HCT116 (cell line): ENCODE measurements at regions of chr17 and their contacts with region 1.

Region 1: DNA sequence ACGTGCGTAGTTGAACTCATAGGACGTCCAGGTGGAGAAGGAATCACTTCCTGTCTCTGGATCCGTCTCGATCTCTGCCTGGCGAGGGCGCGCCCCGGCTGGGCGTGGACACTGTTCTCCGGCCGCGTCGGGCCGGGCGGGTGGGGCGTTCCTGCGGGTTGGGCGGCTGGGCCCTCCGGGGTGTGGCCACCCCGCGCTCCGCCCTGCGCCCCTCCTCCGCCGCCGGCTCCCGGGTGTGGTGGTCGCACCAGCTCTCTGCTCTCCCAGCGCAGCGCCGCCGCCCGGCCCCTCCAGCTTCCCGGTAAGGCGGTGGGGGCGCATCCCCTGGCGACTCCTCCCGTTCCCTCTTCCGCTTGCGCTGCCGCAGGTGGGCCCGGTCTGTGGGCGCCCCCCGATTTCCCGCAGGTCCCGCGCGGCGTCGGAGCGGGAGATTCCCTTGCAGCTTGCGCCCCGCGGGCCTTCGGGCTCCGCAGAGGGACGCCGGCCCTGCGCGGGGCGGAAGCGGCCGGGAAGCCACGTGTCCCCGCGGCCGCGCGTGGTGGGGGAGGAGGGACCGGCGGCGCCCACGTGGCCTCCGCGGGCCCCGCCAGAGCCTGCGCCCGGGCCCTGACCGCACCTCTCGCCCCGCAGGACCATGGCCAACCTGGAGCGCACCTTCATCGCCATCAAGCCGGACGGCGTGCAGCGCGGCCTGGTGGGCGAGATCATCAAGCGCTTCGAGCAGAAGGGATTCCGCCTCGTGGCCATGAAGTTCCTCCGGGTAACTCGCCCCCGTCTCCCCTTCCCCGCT is at the start of gene NME2:
- DNase-seq: peak; percentile 76
- ATAC-seq: peak; percentile 90
- H3K4me3 ChIP-seq: peak within 1 kb of the TSS; percentile 90 to 91
- H3K27ac ChIP-seq: peak within 1 kb of the TSS; percentile 96
- H3K4me1 ChIP-seq: peaks cover 13 to 24% of the 10 kb centered on the region in 2 experiments; a peak in 3 of 4 replicates
- H3K27me3 ChIP-seq: no peaks in the 10 kb centered on the region
- CTCF ChIP-seq: no peak
- POLR2A ChIP-seq: peak; percentile 46
- RAD21 ChIP-seq: no peak
- total RNA-seq, gene NME2: 1,287 TPM

Region 2: DNA sequence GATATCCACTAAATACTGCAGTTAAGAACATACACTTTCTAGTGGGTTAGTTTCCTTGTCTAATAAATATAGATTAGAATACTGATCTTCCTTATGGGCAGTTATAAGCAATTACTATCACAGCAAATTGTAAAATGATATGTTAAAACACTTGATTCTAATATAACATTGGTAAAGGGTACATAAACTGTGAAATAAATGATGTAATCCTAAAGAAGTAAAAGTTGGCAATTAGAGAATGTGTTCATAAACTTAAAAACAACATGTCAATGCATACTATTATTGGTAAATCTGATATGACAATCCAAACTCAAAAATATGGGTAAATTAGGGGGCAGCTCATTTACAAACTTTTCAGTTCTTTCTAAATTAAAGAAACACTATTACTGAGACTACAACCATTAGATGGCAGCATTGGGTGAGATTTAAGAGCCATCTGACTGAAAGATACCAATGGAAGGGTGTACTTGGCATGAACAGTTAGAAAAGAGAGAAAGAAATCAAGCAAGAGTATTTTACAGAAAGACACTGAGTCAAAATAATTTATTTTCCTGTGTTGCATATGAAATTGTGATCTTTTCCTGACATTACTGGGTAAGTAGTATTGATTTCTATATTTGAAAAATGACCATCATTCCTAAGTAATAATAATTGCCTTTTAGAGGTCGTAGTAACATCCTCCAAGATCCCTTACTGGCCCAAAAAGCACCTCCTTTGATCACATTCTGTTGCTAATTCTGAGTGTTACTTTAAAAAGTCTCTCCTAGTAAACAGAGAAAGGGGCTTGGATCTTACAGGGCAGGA is 165.4 kb before region 1 on chr17:
- CTCF ChIA-PET with region 1: interaction called, 8 read pairs
- POLR2A ChIA-PET with region 1: no interaction called
- RAD21 ChIA-PET with region 1: interaction called in 1 of 2 experiments, 3 read pairs
- intact Hi-C with region 1: loop called (anchors 5 kb)
- DNase-seq: peak; percentile 61
- ATAC-seq: peak; percentile 87
- H3K4me3 ChIP-seq: no peak overlapping the region
- H3K27ac ChIP-seq: no peak overlapping the region
- H3K4me1 ChIP-seq: no peaks in the 10 kb centered on the region
- H3K27me3 ChIP-seq: no peaks in the 10 kb centered on the region
- CTCF ChIP-seq: peak; percentile 34 to 89 (median 82); a peak in 5 of 6 replicates
- POLR2A ChIP-seq: no peak
- RAD21 ChIP-seq: peak; percentile 88

Region 3: DNA sequence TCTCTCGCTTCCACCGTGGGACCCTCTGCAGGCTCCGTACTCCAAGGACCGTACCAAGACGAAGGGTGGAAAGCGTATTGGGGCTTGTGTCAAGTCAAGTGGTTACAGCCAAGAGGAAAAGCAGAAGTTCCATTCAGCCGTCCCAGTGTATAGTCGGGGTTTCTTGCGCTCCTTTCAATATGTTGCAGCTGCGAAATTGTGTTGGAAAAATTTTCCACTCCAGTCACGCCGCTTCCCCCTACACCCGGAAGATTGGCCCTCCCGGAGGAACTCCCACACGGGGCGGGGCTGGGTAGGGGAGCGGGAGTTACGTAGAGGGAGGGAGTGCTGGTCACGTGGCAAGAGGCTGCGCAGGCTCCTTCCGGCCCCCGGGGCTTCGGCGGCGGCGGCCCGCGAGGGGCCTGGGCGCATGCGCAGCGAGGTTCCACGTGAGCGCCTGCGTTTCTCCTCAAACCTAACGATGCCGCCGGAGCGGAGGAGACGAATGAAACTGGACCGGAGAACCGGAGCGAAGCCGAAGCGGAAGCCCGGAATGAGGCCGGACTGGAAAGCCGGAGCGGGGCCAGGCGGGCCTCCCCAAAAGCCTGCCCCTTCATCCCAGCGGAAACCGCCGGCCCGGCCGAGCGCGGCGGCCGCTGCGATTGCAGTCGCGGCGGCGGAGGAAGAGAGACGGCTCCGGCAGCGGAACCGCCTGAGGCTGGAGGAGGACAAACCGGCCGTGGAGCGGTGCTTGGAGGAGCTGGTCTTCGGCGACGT is 93.9 kb after region 1 on chr17 and contains the start of gene UTP18:
- CTCF ChIA-PET with region 1: no interaction called
- POLR2A ChIA-PET with region 1: no interaction called
- RAD21 ChIA-PET with region 1: no interaction called
- intact Hi-C with region 1: loop called (anchors 1 kb)
- DNase-seq: peak; percentile 99
- ATAC-seq: peak; percentile 84
- H3K4me3 ChIP-seq: peak within 1 kb of the TSS; percentile 89 to 91
- H3K27ac ChIP-seq: peak within 1 kb of the TSS; percentile 97
- H3K4me1 ChIP-seq: peaks cover 22 to 33% of the 10 kb centered on the region in 2 experiments
- H3K27me3 ChIP-seq: no peaks in the 10 kb centered on the region
- CTCF ChIP-seq: no peak
- POLR2A ChIP-seq: peak; percentile 78
- RAD21 ChIP-seq: no peak
- total RNA-seq, gene UTP18: 92.6 TPM